Activated CD8-positive, alpha-beta T cell treated with anti-CD3 and anti-CD28 coated beads for 36 hours (primary cell): ENCODE measurements at regions of chr14 and their contacts with region 1.

Region 1: DNA sequence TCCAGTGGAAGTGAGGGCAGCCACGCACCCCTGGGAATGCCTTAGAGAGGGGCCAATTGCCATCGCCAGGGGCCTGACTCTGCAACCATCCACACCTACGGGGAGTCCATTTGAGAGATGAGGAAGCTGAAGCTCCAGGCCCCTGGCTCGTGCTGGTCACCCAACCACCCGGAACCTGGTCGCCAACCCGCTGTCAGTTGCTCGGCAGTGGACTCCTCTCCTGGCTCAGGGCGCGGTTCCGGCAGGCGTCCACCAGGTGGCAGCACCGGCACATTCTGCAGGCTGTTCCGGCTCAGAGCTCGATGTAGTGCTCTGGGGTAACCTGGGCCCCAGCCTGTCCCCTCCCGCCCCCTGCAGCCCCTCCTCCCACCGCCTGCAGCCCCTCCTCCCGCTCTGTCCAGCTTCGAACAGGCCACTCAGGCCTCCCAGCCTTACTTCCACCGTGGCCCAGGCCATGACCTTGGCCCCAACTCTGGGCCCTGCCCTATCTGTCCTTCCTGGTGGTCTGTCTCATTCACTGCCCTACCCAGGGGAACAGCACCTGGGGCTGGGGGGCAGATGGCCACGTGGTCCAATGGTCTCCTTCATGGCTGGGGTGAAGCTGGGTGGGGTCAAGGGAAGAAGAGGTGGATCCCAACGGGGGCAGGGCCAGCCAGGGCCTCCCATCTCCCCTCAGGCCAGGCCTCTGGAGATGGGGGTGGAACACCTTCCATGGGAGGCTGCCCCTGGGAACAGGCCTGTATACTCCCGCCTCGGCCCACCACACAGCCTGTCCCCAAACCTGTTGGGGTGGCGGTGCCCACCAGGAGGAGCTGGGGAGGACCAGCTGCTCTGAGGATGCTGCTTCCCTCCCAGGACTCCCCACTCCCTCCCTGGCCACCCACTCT is 15.7 kb downstream of the SIVA1 start:
- DNase-seq: peak; percentile 95
- ATAC-seq: peak; percentile 96
- H3K4me3 Mint-ChIP-seq: no peak overlapping the region
- H3K27ac Mint-ChIP-seq: peak overlapping the region; percentile 52
- H3K4me1 Mint-ChIP-seq: peaks cover 10% of the 10 kb centered on the region
- H3K27me3 Mint-ChIP-seq: no peaks in the 10 kb centered on the region
- CTCF ChIP-seq: peak; percentile 95

Region 2: DNA sequence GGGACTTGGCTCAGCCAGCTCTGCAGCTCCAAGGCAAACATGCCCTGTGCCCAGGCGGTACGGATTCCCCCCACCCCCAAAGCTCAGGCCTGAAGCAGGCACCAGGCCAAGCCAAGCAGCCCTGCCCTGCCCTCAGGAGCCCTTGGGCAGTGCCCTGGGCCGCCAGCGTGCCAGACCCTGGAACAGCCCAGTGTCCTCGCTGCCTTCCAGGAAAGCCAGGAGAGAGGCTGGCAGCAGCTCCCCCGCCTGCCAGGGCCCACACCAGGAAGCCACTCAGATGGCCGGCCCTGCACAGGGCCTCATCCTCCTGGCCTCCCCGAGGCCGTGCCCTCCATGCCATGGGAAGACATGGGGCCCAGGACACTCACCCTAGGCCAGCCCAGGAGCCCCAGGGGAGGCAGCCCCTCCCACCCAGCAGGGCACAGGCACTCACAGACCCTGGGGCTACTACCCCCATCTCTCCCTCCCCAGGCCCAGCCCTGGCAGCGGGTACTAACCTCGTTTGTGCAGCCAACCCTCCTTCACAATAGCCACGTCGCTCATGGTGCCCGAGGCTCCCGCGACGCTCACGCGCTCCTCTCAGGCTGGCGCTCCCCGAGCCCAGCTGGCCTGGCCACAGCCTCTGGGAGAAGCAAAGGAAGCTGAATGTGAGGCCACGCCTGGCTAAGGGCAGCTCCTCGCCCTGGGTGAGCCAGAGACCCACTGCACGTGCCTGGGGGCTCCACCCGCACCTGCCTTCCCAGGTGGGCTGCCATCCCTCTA is 23.6 kb after region 1 on chr14:
- CTCF ChIA-PET with region 1: interaction called, 13 read pairs
- POLR2A ChIA-PET with region 1: interaction called, 3 read pairs
- intact Hi-C with region 1: no loop called
- DNase-seq: no peak
- ATAC-seq: no peak
- H3K4me3 Mint-ChIP-seq: no peak overlapping the region
- H3K27ac Mint-ChIP-seq: no peak overlapping the region
- H3K4me1 Mint-ChIP-seq: peaks cover 32% of the 10 kb centered on the region
- H3K27me3 Mint-ChIP-seq: no peaks in the 10 kb centered on the region
- CTCF ChIP-seq: no peak

Region 3: GRCh38 chr14:104826189-104826860 is 57.6 kb after region 1 on chr14:
- CTCF ChIA-PET with region 1: interaction called, 79 read pairs
- POLR2A ChIA-PET with region 1: interaction called, 6 read pairs
- intact Hi-C with region 1: no loop called
- DNase-seq: peak; percentile 92
- ATAC-seq: peak; percentile 92
- H3K4me3 Mint-ChIP-seq: peak overlapping the region; percentile 68
- H3K27ac Mint-ChIP-seq: no peak overlapping the region
- H3K4me1 Mint-ChIP-seq: peaks cover 16% of the 10 kb centered on the region
- H3K27me3 Mint-ChIP-seq: peaks cover 13% of the 10 kb centered on the region
- CTCF ChIP-seq: peak; percentile 76